H1 (cell line): ENCODE measurements at regions of chr17 and their contacts with region 1.

Region 1: GRCh38 chr17:10652984-10653659 is 4.0 kb downstream of the MYH3 start:
- DNase-seq: no peak
- H3K4me3 ChIP-seq: no peak overlapping the region
- H3K27ac ChIP-seq: no peak overlapping the region
- H3K4me1 ChIP-seq: no peaks in the 10 kb centered on the region
- H3K27me3 ChIP-seq: no peaks in the 10 kb centered on the region
- CTCF ChIP-seq: no peak
- EP300 ChIP-seq: no peak
- POLR2A ChIP-seq: no peak
- RAD21 ChIP-seq: no peak

Region 2: DNA sequence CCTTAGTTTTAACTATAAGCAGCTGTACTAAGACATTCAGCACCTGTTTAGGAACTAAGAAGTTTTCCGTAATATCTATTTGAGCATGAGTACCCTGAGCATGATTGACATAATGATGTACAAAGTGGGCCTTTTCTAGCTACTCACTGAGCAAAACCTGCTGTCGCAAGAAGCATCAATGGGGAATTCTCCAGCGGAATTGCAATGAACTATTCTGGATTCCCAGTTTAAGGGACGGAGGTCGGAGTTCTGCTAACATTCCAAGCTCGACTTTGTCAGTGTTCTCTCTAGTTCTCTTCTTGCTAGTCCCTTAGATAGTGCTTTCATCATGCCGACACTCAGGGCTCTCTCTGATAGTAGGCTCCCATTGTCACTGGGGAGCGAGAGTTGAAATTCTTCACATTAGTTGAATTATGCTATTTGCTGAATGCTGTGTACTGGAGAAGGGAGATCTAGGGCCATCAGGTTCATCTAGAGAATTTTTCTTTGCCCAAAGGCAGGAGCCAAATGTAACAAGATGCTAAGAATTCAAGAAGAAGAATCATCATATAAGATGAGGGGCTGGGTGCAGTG is 63.5 kb before region 1 on chr17:
- CTCF ChIA-PET with region 1: no interaction called
- POLR2A ChIA-PET with region 1: no interaction called
- DNase-seq: no peak
- H3K4me3 ChIP-seq: no peak overlapping the region
- H3K27ac ChIP-seq: no peak overlapping the region
- H3K4me1 ChIP-seq: no peaks in the 10 kb centered on the region
- H3K27me3 ChIP-seq: no peaks in the 10 kb centered on the region
- CTCF ChIP-seq: no peak
- EP300 ChIP-seq: no peak
- POLR2A ChIP-seq: no peak
- RAD21 ChIP-seq: no peak

Region 3: GRCh38 chr17:10631048-10631700 is 21.9 kb before region 1 on chr17:
- CTCF ChIA-PET with region 1: interaction called, 223 read pairs
- POLR2A ChIA-PET with region 1: no interaction called
- DNase-seq: peak in 1 of 2 experiments; percentile 85
- H3K4me3 ChIP-seq: no peak overlapping the region
- H3K27ac ChIP-seq: no peak overlapping the region
- H3K4me1 ChIP-seq: no peaks in the 10 kb centered on the region
- H3K27me3 ChIP-seq: no peaks in the 10 kb centered on the region
- CTCF ChIP-seq: peak; percentile 75 to 79 (median 78)
- EP300 ChIP-seq: no peak
- POLR2A ChIP-seq: no peak
- RAD21 ChIP-seq: peak; percentile 65 to 70